Cardiac septum (tissue), 1 donor: ENCODE measurements at regions of chr11 and their contacts with region 1.

Region 1: GRCh38 chr11:3109921-3110706 is 52.9 kb upstream of the CARS1 start:
- DNase-seq: peak; percentile 73

Region 2: DNA sequence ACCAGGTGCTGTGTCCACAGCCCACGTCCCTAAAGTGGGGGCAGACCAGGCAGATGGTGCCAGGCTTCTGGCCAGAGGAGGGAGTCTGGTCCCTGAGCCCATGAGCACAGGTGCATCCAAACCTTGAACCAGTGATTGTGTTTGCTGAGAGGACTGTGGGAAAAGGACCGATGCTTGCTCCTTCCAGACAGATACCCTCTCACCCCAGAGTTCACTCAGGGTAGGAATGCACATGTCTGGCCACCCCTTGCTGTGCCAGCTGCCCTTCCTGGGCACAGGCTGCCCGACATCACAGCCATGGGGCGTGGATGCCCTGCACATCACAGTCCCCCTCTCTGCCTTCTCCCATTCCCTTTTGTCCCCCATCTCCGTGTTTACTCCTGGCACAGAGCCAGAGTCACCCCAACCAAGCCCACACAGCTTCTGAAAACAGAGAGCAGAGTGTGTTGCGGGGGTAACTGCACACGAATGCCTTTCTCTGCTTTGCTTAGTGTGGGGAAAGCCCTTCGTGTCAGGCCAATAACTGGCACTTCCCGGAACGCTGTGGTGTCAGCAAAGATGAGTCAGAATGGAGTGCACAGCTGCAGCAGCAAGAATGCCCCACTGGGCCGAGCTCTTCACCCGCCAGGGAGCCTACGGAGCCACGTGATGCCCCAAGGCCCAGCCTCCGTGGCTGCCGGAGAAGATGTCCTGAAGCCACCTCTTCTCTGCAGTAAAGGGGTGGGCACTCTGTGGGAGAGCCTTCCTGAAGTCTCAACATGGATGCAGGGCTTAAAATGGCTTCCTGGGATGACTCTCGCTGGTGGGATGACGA is 60.5 kb before region 1 on chr11:
- intact Hi-C with region 1: no loop called
- DNase-seq: peak; percentile 81

Region 3: DNA sequence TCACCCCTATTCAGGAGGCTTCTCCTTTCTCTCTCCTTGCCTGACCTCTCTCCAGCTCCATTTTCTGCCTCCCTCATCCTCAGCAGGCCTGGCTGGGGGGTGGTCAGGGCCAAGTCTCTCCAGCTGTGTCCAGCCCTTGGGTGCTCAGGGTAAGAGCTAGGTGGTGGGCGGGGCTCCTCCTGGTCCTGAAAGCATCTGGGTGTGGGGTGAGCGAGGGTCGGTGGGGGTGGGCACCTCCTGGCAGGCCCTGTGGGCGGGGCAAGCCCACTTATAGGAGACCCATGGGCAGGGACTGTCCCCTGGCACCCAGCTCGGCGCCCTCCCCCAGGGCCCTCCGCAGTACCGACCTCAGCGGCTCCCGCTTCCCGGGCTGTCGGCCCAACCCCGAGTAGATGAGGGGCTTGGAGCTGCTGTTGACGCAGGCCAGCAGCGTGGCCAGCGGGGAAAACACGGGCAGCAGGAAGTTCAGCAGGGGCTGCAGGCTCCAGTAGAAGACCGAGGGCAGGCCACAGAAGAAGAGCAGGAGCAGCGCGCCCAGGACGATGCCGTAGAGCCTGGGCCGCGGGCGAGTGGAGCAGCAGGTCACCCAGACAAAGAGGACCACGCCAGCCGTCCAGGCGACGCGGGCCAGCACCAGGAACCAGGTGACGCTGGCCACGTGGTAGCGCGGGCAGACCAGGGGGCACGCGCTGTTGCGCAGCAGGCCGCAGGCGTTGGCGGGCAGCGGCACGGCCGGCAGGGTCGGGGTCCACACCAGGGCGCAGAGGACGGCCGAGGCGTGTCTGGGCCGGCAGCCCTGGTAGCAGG is 107.8 kb after region 1 on chr11:
- intact Hi-C with region 1: loop called (anchors 2 kb)
- DNase-seq: peak; percentile 67